Common myeloid progenitor, CD34-positive (primary cell): ENCODE measurements at regions of chr11 and their contacts with region 1.

Region 1: GRCh38 chr11:102390667-102391465 is 43.9 kb downstream of the BIRC2 start:
- DNase-seq: peak; percentile 44 to 61 (median 52)
- H3K4me3 ChIP-seq: no peak overlapping the region
- H3K27ac ChIP-seq: no peak overlapping the region
- H3K4me1 ChIP-seq: peaks cover 0 to 4% (median 3%) of the 10 kb centered on the region in 4 experiments
- H3K27me3 ChIP-seq: no peaks in the 10 kb centered on the region

Region 2: DNA sequence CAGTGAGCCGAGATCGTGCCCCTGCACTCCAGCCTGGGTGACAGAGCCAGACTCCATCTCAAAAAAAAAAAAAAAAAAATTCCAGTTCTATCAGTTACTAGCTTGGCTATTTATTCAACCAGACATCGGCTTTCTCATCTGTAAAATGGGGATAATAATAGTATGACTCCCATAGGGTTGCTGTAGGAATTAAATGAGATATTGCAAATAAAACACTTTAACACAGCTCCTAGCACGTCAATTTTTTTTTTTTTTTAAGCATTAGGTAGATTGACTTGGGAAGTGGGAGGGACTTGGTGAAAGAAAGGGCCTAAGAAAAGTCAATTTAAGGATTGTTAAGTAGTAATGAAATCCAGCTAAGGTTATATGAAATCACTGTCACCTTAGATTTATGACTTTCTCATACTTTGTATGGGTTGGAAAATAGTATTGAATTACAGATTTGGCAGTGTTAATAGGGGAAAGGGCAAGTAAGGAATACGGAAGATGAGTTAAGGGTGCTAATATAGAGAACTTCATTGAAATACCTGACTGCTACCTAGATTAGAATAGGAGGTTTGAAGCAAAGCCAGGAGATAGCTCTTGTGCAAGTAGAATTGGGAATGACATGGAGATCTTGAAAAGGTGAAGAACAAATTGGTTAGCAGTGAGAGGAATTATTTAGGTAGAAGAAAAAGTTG is 15.0 kb before region 1 on chr11:
- CTCF ChIA-PET with region 1: interaction called, 55 read pairs
- POLR2A ChIA-PET with region 1: no interaction called
- DNase-seq: no peak
- H3K4me3 ChIP-seq: no peak overlapping the region
- H3K27ac ChIP-seq: no peak overlapping the region
- H3K4me1 ChIP-seq: no peaks in the 10 kb centered on the region
- H3K27me3 ChIP-seq: no peaks in the 10 kb centered on the region

Region 3: DNA sequence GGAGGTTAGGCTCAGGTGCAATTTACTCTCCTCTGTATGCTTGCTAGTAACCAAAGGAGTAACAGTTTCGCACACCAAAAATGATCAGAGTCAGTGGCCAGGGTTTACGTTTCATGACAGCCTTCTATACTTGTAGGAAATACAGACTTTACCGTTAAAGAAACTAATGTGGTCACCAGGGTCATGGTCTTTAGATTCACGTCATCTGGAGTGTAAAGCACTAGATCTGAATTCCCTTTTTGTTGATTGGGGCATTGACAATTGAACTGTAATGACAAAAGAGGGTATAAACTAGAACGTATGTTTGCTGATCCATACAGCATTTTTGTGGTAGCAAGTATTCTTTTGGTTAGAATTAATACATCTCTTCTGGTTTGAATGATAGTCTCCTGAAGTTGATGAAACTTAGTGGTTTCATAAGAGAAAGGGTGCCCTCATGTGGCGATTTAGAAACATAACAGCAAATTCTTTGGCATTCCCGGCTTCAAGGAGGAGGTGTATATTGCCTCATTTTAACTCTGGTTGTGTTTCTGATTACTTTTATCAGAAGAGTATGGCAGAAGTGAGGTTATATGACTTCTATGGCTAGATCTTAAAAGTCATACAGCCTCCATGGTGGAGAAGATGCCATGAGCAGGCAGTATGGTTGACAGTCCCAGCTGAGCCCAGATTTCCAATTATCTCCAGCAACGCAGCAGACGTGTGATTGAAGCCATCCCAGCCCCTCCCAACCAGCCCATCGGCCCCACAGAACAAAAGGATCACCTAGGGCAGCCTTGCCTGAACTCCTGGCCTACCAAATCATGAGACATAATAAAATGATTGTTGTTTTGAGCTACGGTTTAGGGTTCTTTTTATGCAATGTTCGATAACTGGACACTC is 104.5 kb after region 1 on chr11:
- CTCF ChIA-PET with region 1: interaction called, 13 read pairs
- POLR2A ChIA-PET with region 1: no interaction called
- DNase-seq: peak; percentile 82 to 90 (median 86)
- H3K4me3 ChIP-seq: no peak overlapping the region
- H3K27ac ChIP-seq: no peak overlapping the region
- H3K4me1 ChIP-seq: no peaks in the 10 kb centered on the region
- H3K27me3 ChIP-seq: no peaks in the 10 kb centered on the region